ENCODE measurements at regions of chr1 and their contacts with region 1.

Region 1: GRCh38 chr1:26102526-26102925 is 9.1 kb upstream of the PDIK1L start:
- DNase-seq: no peak
- H3K4me3 Mint-ChIP-seq: no peak overlapping the region
- H3K27ac Mint-ChIP-seq: no peak overlapping the region
- H3K4me1 Mint-ChIP-seq: peaks cover 4% of the 10 kb centered on the region
- H3K27me3 Mint-ChIP-seq: no peaks in the 10 kb centered on the region

Region 2: GRCh38 chr1:26035959-26036755 is 66.4 kb before region 1 on chr1:
- CTCF ChIA-PET with region 1: interaction called, 6 read pairs
- intact Hi-C with region 1: loop called (anchors 1 kb)
- DNase-seq: peak; percentile 78
- H3K4me3 Mint-ChIP-seq: peak overlapping the region; percentile 88
- H3K27ac Mint-ChIP-seq: no peak overlapping the region
- H3K4me1 Mint-ChIP-seq: peaks cover 13% of the 10 kb centered on the region
- H3K27me3 Mint-ChIP-seq: peaks cover 3% of the 10 kb centered on the region

Region 3: GRCh38 chr1:26164036-26164860 is 61.7 kb after region 1 on chr1:
- CTCF ChIA-PET with region 1: interaction called, 3 read pairs
- intact Hi-C with region 1: loop called (anchors 1 kb)
- DNase-seq: peak; percentile 42
- H3K4me3 Mint-ChIP-seq: peak overlapping the region; percentile 50
- H3K27ac Mint-ChIP-seq: no peak overlapping the region
- H3K4me1 Mint-ChIP-seq: peaks cover 13% of the 10 kb centered on the region
- H3K27me3 Mint-ChIP-seq: peaks cover 25% of the 10 kb centered on the region

Region 4: GRCh38 chr1:26391450-26391849 is 288.9 kb after region 1 on chr1:
- CTCF ChIA-PET with region 1: no interaction called
- intact Hi-C with region 1: loop called (anchors 10 kb)
- DNase-seq: peak; percentile 59
- H3K4me3 Mint-ChIP-seq: no peak overlapping the region
- H3K27ac Mint-ChIP-seq: no peak overlapping the region
- H3K4me1 Mint-ChIP-seq: peaks cover 19% of the 10 kb centered on the region
- H3K27me3 Mint-ChIP-seq: no peaks in the 10 kb centered on the region

Region 5: GRCh38 chr1:26408604-26409003 is 306.1 kb after region 1 on chr1:
- CTCF ChIA-PET with region 1: no interaction called
- intact Hi-C with region 1: no loop called
- DNase-seq: peak; percentile 86
- H3K4me3 Mint-ChIP-seq: no peak overlapping the region
- H3K27ac Mint-ChIP-seq: no peak overlapping the region
- H3K4me1 Mint-ChIP-seq: peaks cover 26% of the 10 kb centered on the region
- H3K27me3 Mint-ChIP-seq: peaks cover 46% of the 10 kb centered on the region